Naive thymus-derived CD4-positive, alpha-beta T cell (primary cell): ENCODE measurements at regions of chr9 and their contacts with region 1.

Region 1: DNA sequence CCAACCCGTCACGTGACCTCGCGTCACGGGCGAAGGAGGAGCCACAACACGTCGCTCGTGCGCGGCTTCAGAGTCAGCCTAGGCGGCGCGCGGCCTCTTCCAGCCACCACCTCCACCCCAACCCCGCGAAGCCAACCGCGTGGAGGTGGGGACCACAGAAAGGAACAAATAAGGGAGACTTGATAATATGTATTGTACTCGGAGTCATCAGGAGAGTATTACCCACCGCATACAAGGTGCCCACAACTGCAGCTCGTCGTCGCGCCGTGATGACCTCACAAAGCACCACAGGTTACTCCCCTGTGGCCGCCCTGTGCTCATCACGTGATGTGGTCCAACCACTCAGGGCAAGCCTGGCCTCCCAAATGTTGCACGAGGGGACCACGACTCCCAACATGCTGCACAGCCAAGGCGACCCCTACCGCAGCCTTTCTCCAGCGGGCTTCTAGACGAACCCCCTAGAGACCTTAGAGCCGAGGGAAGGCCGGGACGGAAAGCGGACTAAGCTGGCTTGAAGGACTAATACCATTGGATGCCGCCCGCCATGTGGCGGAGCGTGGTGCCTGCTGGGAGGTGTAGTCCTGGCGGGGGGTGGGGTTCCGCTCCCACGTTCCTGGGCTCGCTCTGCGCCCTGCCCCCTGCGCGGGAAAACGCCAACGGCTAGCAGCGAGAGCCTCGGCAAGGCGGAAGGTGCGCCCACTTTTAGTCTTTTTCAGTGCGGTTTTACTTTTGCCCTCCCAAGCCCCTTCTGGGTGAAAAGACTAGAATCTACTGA is 423 bp upstream of the UBAP2 start:
- DNase-seq: peak; percentile 96 to 99 (median 97)
- ATAC-seq: peak; percentile 93
- H3K4me3 ChIP-seq: peak overlapping the region; percentile 98
- H3K4me3 Mint-ChIP-seq: peak overlapping the region; percentile 96 to 100 (median 98)
- H3K27ac ChIP-seq: peak overlapping the region; percentile 86
- H3K27ac Mint-ChIP-seq: peak overlapping the region; percentile 98 to 100 (median 99)
- H3K4me1 ChIP-seq: peaks cover 11 to 22% of the 10 kb centered on the region in 2 donors
- H3K4me1 Mint-ChIP-seq: peaks cover 25 to 55% (median 31%) of the 10 kb centered on the region in 7 donors
- H3K27me3 ChIP-seq: no peaks in the 10 kb centered on the region
- H3K27me3 Mint-ChIP-seq: peaks cover 0 to 4% (median 0%) of the 10 kb centered on the region in 5 donors

Region 2: GRCh38 chr9:33024966-33025571 is 1024.0 kb before region 1 on chr9 and contains the start of gene DNAJA1:
- CTCF ChIA-PET with region 1: no interaction called
- POLR2A ChIA-PET with region 1: no interaction called
- intact Hi-C with region 1: loop called in 1 of 2 experiments (anchors 10 kb)
- DNase-seq: peak; percentile 92 to 99 (median 97)
- ATAC-seq: peak; percentile 91
- H3K4me3 ChIP-seq: peak within 1 kb of the TSS; percentile 98
- H3K4me3 Mint-ChIP-seq: peak within 1 kb of the TSS; percentile 91 to 99 (median 96)
- H3K27ac ChIP-seq: peak within 1 kb of the TSS; percentile 100
- H3K27ac Mint-ChIP-seq: peak within 1 kb of the TSS; percentile 82 to 98 (median 95)
- H3K4me1 ChIP-seq: peaks cover 37 to 49% of the 10 kb centered on the region in 2 donors
- H3K4me1 Mint-ChIP-seq: peaks cover 51 to 83% (median 78%) of the 10 kb centered on the region in 7 donors
- H3K27me3 ChIP-seq: no peaks in the 10 kb centered on the region
- H3K27me3 Mint-ChIP-seq: no peaks in the 10 kb centered on the region
- total RNA-seq, gene DNAJA1: 66.8 to 204 (median 119) TPM

Region 3: GRCh38 chr9:34072868-34073590 is 23.9 kb after region 1 on chr9:
- CTCF ChIA-PET with region 1: no interaction called
- POLR2A ChIA-PET with region 1: no interaction called
- intact Hi-C with region 1: loop called in 1 of 2 experiments (anchors 2 kb)
- DNase-seq: no peak
- ATAC-seq: no peak
- H3K4me3 ChIP-seq: no peak overlapping the region
- H3K4me3 Mint-ChIP-seq: no peak overlapping the region
- H3K27ac ChIP-seq: no peak overlapping the region
- H3K27ac Mint-ChIP-seq: peak overlapping the region in 3 of 9 donors; percentile 28 to 62 (median 45)
- H3K4me1 ChIP-seq: no peaks in the 10 kb centered on the region
- H3K4me1 Mint-ChIP-seq: peaks cover 0 to 12% (median 0%) of the 10 kb centered on the region in 7 donors
- H3K27me3 ChIP-seq: no peaks in the 10 kb centered on the region
- H3K27me3 Mint-ChIP-seq: no peaks in the 10 kb centered on the region

Region 4: DNA sequence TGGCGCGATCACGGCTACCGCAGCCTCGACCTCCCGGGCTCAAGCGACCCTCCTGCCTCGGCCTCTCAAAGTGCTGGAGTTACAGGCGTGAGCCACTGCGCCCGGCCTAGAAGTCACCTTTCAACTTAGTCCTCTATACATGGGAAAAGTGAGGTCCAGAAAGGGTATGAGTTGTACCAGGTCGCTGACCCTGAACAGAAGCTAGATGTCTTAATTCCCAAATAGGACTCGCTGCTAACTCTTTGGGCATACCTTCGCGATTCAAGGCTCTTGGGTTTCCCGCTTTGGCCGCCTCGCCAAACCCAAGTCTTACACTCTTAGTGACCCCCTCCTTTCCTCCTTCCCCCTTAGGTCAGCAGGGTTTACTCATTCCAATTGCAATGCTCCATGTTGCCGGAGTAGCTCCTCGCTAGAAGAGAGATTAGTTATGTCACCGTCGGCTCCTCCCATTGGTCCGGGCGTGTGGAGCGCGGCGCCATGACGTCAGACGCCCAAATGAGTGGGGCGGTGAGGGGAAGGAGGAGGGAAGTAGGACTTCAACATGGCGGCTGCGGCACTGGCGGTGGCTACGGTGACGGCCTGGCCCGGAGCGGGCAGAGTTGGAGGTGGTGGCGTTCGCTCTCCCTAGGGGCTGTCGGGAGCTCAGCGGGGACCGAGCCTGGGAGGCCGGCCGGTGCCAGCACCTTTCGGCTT is 129.6 kb after region 1 on chr9 and contains the start of gene UBAP1:
- CTCF ChIA-PET with region 1: no interaction called
- POLR2A ChIA-PET with region 1: interaction called, 10 read pairs
- intact Hi-C with region 1: loop called (anchors 1 kb)
- DNase-seq: peak; percentile 83 to 97 (median 93)
- ATAC-seq: peak; percentile 99
- H3K4me3 ChIP-seq: peak within 1 kb of the TSS; percentile 93
- H3K4me3 Mint-ChIP-seq: peak within 1 kb of the TSS; percentile 93 to 100 (median 96)
- H3K27ac ChIP-seq: peak within 1 kb of the TSS; percentile 97
- H3K27ac Mint-ChIP-seq: peak within 1 kb of the TSS; percentile 94 to 99 (median 98)
- H3K4me1 ChIP-seq: peaks cover 0 to 8% of the 10 kb centered on the region in 2 donors
- H3K4me1 Mint-ChIP-seq: peaks cover 7 to 33% (median 21%) of the 10 kb centered on the region in 7 donors
- H3K27me3 ChIP-seq: no peaks in the 10 kb centered on the region
- H3K27me3 Mint-ChIP-seq: no peaks in the 10 kb centered on the region
- total RNA-seq, gene UBAP1: 31.1 to 39.9 (median 32.8) TPM

Region 5: DNA sequence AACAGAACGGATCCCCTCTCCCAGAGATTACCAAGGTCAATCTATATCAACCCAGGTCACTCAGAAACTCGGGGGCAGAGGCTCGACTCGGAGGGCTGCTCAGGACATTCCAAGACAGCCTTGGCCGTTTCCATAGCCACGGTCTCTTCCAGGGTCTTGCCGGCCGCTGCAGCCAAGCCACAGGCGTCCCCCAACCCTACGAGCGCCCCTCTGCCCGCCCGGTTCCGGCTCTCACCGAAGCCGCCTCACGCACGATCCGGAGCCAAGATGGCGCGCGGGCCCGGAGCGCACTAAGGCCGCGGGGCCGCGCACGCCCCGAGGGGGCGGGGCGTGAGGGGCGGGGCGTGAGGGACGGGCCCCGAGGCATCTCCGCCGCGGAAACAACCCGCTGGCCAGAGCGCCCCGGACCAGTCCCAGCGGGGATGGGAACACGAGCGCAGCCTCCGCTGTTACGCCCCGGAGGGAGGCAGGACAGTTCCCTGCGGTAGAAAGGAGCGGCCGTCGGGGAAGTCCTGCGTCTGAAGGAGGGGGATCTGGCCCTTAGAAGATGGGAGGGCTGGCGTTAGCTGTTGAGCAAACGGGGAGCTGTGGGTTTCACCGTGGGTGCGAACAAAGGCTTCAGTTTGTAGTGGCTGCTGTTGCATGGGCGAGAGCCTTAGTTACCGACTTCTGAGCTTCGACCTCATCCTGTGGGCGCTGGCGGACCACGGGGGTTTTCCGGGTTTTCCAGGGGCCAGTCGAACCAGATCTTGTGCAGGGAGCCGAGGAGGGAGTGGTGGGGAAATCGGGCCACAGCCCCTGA is 562.9 kb after region 1 on chr9 and contains the start of gene RPP25L:
- CTCF ChIA-PET with region 1: no interaction called
- POLR2A ChIA-PET with region 1: no interaction called
- intact Hi-C with region 1: loop called in 1 of 2 experiments (anchors 2 kb)
- DNase-seq: peak; percentile 75 to 94 (median 86)
- ATAC-seq: peak; percentile 96
- H3K4me3 ChIP-seq: peak within 1 kb of the TSS; percentile 89
- H3K4me3 Mint-ChIP-seq: peak within 1 kb of the TSS; percentile 84 to 96 (median 90)
- H3K27ac ChIP-seq: peak within 1 kb of the TSS; percentile 87
- H3K27ac Mint-ChIP-seq: peak within 1 kb of the TSS; percentile 84 to 96 (median 93)
- H3K4me1 ChIP-seq: peaks cover 10 to 17% of the 10 kb centered on the region in 2 donors
- H3K4me1 Mint-ChIP-seq: peaks cover 6 to 28% (median 21%) of the 10 kb centered on the region in 7 donors
- H3K27me3 ChIP-seq: no peaks in the 10 kb centered on the region
- H3K27me3 Mint-ChIP-seq: no peaks in the 10 kb centered on the region
- total RNA-seq, gene RPP25L: 8.8 to 27.3 (median 25.1) TPM

Region 6: DNA sequence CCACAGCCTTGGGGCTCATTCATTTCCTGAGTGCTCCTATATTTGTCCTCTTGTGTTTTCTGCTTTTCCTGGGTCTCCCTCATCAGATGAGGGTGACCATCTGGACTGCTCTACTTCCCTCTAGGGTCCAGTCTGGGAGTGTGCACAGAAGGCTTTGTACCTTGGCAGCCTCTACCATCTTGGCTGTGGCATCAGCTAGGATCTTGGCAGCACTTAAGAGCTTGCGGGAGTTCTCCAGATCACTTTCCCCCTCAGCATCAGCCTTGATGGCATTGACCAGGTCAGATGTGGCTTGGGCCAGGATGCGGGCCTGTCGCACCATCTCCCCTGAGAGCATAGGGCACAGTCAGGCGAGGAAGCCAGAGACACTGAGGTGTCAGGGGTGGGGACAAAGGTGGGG is 1667.1 kb after region 1 on chr9:
- CTCF ChIA-PET with region 1: no interaction called
- POLR2A ChIA-PET with region 1: no interaction called
- intact Hi-C with region 1: no loop called
- DNase-seq: no peak
- ATAC-seq: no peak
- H3K4me3 ChIP-seq: no peak overlapping the region
- H3K4me3 Mint-ChIP-seq: no peak overlapping the region
- H3K27ac ChIP-seq: no peak overlapping the region
- H3K27ac Mint-ChIP-seq: peak overlapping the region in 4 of 9 donors; percentile 30 to 87 (median 77)
- H3K4me1 ChIP-seq: no peaks in the 10 kb centered on the region
- H3K4me1 Mint-ChIP-seq: peaks cover 0 to 5% (median 0%) of the 10 kb centered on the region in 7 donors
- H3K27me3 ChIP-seq: no peaks in the 10 kb centered on the region
- H3K27me3 Mint-ChIP-seq: no peaks in the 10 kb centered on the region